ENCODE measurements at regions of chr4 and their contacts with region 1.

Region 1: GRCh38 chr4:25938787-25939186 is 24.8 kb downstream of the SMIM20 start:
- DNase-seq: no peak
- H3K4me3 ChIP-seq: no peak overlapping the region
- H3K27ac ChIP-seq: no peak overlapping the region
- H3K4me1 ChIP-seq: no peaks in the 10 kb centered on the region
- H3K27me3 ChIP-seq: no peaks in the 10 kb centered on the region
- CTCF ChIP-seq: no peak

Region 2: DNA sequence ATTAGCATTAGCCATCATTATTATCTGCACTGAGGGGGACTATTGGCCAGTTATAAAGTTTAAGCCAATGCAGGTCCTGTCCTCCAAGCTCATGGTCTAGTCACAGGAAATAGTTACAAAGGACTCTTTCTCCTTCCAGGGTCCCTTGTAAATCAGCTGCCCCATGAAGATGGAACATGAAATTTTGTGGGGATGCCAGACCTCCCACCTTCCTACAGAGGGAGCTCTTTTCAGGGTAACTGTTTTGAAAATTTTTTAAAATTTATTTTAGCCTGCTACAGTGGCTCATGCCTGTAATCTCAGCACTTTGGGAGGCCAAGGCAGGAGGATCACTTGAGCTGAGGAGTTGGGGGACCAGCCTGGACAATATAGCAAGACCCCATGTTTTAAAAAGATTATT is 407.5 kb before region 1 on chr4:
- CTCF ChIA-PET with region 1: no interaction called
- POLR2A ChIA-PET with region 1: interaction called, 10 read pairs
- intact Hi-C with region 1: no loop called
- DNase-seq: no peak
- H3K4me3 ChIP-seq: no peak overlapping the region
- H3K27ac ChIP-seq: no peak overlapping the region
- H3K4me1 ChIP-seq: no peaks in the 10 kb centered on the region
- H3K27me3 ChIP-seq: no peaks in the 10 kb centered on the region
- CTCF ChIP-seq: peak; percentile 56

Region 3: GRCh38 chr4:25743971-25744370 is 194.8 kb before region 1 on chr4:
- CTCF ChIA-PET with region 1: no interaction called
- POLR2A ChIA-PET with region 1: no interaction called
- intact Hi-C with region 1: no loop called
- DNase-seq: no peak
- H3K4me3 ChIP-seq: no peak overlapping the region
- H3K27ac ChIP-seq: no peak overlapping the region
- H3K4me1 ChIP-seq: no peaks in the 10 kb centered on the region
- H3K27me3 ChIP-seq: no peaks in the 10 kb centered on the region
- CTCF ChIP-seq: no peak